ENCODE measurements at regions of chr17 and their contacts with region 1.

Region 1: GRCh38 chr17:81222906-81223761 is at the start of gene CEP131:
- DNase-seq: peak; percentile 97 to 100 (median 100)
- ATAC-seq: peak; percentile 95
- H3K4me3 ChIP-seq: peak within 1 kb of the TSS; percentile 65
- H3K4me3 Mint-ChIP-seq: peak within 1 kb of the TSS; percentile 87
- H3K27ac ChIP-seq: no peak within 1 kb of the TSS
- H3K27ac Mint-ChIP-seq: no peak within 1 kb of the TSS
- H3K4me1 ChIP-seq: peaks cover 25% of the 10 kb centered on the region
- H3K4me1 Mint-ChIP-seq: peaks cover 23% of the 10 kb centered on the region
- H3K27me3 ChIP-seq: no peaks in the 10 kb centered on the region
- H3K27me3 Mint-ChIP-seq: no peaks in the 10 kb centered on the region
- CTCF ChIP-seq: no peak
- total RNA-seq, gene CEP131: 11.2 to 12.3 TPM

Region 2: DNA sequence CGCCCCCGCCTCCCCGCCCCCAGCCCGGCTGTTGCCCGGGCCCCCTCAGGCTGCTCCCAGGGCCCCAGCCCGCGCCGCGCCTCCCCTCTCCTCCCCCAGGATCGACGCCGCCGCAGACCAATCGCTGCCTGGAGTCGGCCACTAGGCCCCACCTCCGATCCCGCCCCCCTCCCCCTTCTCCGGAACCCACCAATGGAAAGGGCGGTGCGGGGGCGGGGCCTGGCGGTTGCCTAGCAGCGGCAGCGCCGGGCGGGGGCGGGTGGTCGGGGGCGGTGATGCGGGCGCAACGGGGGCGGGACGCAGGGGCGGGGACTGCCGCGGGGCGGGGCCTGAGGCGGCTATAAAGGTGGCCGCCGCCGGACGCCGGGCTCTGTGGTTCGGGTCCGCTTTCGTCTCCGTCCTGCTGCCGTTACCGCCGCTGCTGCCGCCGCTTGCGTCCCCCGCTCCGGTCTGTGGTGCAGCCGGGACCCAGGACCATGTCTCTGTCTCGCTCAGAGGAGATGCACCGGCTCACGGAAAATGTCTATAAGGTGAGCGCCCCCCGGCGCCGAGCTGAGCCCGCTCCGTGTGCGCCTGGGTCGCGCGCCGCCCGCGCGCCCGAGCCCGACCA is 188.2 kb before region 1 on chr17 and contains the start of gene BAIAP2:
- CTCF ChIA-PET with region 1: no interaction called
- POLR2A ChIA-PET with region 1: no interaction called
- intact Hi-C with region 1: loop called in 1 of 2 experiments (anchors 2 kb)
- DNase-seq: peak; percentile 96 to 100 (median 98)
- ATAC-seq: peak; percentile 86
- H3K4me3 ChIP-seq: peak within 1 kb of the TSS; percentile 60
- H3K4me3 Mint-ChIP-seq: peak within 1 kb of the TSS; percentile 98
- H3K27ac ChIP-seq: no peak within 1 kb of the TSS
- H3K27ac Mint-ChIP-seq: peak within 1 kb of the TSS; percentile 82
- H3K4me1 ChIP-seq: peaks cover 25% of the 10 kb centered on the region
- H3K4me1 Mint-ChIP-seq: peaks cover 28% of the 10 kb centered on the region
- H3K27me3 ChIP-seq: peaks cover 0 to 2% of the 10 kb centered on the region in 2 experiments
- H3K27me3 Mint-ChIP-seq: peaks cover 1% of the 10 kb centered on the region
- CTCF ChIP-seq: no peak
- total RNA-seq, gene BAIAP2: 4.2 to 4.9 TPM

Region 3: DNA sequence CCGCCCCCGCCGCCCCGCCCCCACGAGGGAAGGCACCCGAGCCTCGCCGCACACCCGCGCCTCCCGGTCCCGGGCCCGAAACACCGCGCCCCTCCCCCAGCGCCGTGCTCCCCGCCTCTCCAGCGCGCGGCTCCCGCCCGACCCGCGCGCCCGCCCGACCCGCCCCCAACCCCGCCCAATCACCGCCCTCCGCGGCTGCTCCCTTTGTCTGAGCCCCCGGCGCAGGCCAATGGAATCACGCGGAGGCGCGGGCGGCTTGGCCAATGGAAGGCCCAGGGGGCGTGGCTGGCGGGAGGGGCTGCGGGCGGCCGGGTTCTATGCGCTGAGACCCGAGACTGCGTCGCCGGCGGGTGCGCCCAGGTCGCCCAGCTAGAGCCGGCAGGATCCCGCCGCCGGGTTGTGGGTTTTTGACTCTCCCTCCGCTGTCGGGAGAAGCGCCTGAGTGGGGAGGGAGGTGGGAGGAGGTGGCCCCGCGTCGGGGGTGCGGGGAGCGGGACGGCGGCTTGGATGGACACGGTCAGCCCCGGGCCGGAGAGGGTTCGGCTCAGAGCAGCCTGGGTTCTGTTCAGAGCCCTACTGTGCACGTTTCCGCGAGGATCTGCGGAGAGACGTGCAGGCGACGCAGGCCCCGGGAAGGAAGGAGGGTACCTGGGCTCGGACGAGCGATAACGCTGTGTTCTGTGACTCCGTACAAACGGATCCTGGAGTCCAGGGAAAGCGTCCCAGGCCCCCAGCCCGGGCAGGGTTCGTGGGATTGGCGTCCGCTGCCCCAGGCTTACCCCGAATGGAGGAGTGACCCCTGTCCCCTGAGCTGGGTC is 123.2 kb after region 1 on chr17:
- CTCF ChIA-PET with region 1: no interaction called
- POLR2A ChIA-PET with region 1: no interaction called
- intact Hi-C with region 1: loop called in 1 of 2 experiments (anchors 2 kb)
- DNase-seq: peak; percentile 85 to 97 (median 93)
- ATAC-seq: peak; percentile 95
- H3K4me3 ChIP-seq: peak overlapping the region; percentile 54
- H3K4me3 Mint-ChIP-seq: peak overlapping the region; percentile 58
- H3K27ac ChIP-seq: no peak overlapping the region
- H3K27ac Mint-ChIP-seq: no peak overlapping the region
- H3K4me1 ChIP-seq: peaks cover 51% of the 10 kb centered on the region
- H3K4me1 Mint-ChIP-seq: peaks cover 20% of the 10 kb centered on the region
- H3K27me3 ChIP-seq: peaks cover 35 to 39% of the 10 kb centered on the region in 2 experiments
- H3K27me3 Mint-ChIP-seq: peaks cover 33% of the 10 kb centered on the region
- CTCF ChIP-seq: no peak

Measured in CD4-positive, alpha-beta T cell (primary cell).